Activated CD8-positive, alpha-beta T cell treated with anti-CD3 and anti-CD28 coated beads for 36 hours (primary cell): ENCODE measurements at regions of chr6 and their contacts with region 1.

Region 1: GRCh38 chr6:10383781-10384616 is 30.9 kb downstream of the TFAP2A start:
- DNase-seq: no peak
- ATAC-seq: no peak
- H3K4me3 Mint-ChIP-seq: no peak overlapping the region
- H3K27ac Mint-ChIP-seq: peak overlapping the region; percentile 28
- H3K4me1 Mint-ChIP-seq: peaks cover 6% of the 10 kb centered on the region
- H3K27me3 Mint-ChIP-seq: peaks cover 75% of the 10 kb centered on the region
- CTCF ChIP-seq: no peak

Region 2: DNA sequence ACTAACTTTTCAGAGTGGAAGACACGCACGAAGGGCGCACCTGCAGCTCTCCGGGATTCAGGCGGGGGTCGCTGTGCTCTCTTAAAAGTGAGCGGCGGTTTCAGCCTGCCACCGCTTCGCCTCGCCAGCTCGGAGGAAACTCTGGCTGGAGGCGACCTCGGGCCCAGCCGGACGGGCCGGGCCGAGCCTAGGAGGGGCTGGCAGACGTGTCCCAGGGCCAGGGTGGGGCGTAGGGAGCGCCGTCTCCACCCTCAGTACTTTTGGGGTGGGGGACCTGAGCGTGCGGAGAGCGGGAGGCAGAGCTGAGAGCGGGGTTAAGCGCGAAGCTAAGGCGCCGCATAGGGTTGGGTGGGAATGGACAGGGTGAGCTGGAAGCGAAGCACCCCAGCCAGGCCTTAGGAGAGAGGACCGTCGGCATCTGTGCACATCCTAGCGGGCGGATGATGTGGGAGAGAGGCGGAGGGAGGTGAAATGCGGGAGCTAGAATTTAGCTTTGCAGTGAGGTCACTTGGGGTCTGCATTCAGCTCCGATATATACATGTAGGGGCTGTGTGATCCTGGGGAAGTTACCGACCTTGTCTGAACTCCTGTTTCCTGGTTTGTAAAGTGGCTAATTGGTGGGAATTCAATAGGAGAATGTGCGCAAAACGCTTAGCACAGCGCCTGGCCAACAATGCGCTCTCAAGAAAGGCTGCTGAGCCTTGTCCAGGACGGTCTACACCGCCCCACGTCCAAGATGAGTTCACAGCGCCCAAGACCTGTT is 37.3 kb after region 1 on chr6:
- CTCF ChIA-PET with region 1: interaction called, 3 read pairs
- POLR2A ChIA-PET with region 1: interaction called, 3 read pairs
- intact Hi-C with region 1: loop called (anchors 2 kb)
- DNase-seq: no peak
- ATAC-seq: no peak
- H3K4me3 Mint-ChIP-seq: no peak overlapping the region
- H3K27ac Mint-ChIP-seq: no peak overlapping the region
- H3K4me1 Mint-ChIP-seq: peaks cover 13% of the 10 kb centered on the region
- H3K27me3 Mint-ChIP-seq: peaks cover 87% of the 10 kb centered on the region
- CTCF ChIP-seq: no peak

Region 3: GRCh38 chr6:10487668-10488327 is 103.8 kb after region 1 on chr6:
- CTCF ChIA-PET with region 1: no interaction called
- POLR2A ChIA-PET with region 1: no interaction called
- intact Hi-C with region 1: no loop called
- DNase-seq: no peak
- ATAC-seq: no peak
- H3K4me3 Mint-ChIP-seq: no peak overlapping the region
- H3K27ac Mint-ChIP-seq: no peak overlapping the region
- H3K4me1 Mint-ChIP-seq: no peaks in the 10 kb centered on the region
- H3K27me3 Mint-ChIP-seq: no peaks in the 10 kb centered on the region
- CTCF ChIP-seq: no peak